ENCODE measurements at regions of chrX and their contacts with region 1.

Region 1: GRCh38 chrX:10722851-10723250 is 102.5 kb upstream of the MID1 start:
- DNase-seq: peak; percentile 54
- H3K4me3 Mint-ChIP-seq: no peak overlapping the region
- H3K27ac Mint-ChIP-seq: no peak overlapping the region
- H3K4me1 Mint-ChIP-seq: no peaks in the 10 kb centered on the region
- H3K27me3 Mint-ChIP-seq: no peaks in the 10 kb centered on the region

Region 2: DNA sequence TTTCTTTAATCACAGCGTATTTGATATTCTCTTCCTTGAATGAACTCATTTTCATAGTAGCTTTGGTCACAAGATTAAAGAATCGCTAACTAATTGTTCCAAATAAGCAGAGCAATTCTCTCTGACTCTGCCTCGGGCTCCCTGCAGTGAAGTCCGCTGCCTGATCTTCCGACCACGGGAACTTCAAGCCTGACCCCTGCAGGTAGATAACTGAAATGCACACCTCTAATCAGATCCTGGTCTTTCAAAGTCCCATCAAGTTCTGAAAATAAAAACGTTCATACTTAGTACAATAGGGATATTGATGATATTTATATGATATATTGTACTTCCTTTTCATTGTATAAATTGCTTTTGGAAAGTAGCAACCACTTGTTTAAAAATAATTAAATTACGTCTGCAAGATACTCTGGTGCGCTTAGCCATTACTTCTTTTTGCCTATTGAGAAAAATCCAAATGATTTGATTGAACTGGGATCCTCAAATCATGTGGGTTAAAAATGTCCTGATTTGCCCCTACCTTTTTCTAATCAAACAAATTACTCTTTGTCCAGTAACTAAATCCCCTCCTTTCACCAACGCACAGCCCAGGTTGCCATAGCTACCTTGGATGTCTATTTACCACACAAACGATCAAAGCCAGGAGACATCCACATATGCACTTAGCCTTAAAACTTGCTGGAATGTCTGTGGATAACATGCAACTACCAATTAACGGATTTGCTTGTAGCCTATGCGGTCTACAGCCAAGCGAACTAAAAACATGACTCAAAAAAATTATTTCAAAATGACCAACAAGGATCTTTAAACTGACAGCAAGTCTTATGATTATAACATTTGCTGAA is 106.7 kb before region 1 on chrX:
- CTCF ChIA-PET with region 1: no interaction called
- intact Hi-C with region 1: loop called (anchors 5 kb)
- DNase-seq: peak; percentile 13
- H3K4me3 Mint-ChIP-seq: no peak overlapping the region
- H3K27ac Mint-ChIP-seq: no peak overlapping the region
- H3K4me1 Mint-ChIP-seq: peaks cover 6% of the 10 kb centered on the region
- H3K27me3 Mint-ChIP-seq: peaks cover 27% of the 10 kb centered on the region

Region 3: GRCh38 chrX:11137543-11138139 is 414.8 kb after region 1 on chrX:
- CTCF ChIA-PET with region 1: no interaction called
- intact Hi-C with region 1: loop called (anchors 2 kb)
- DNase-seq: no peak
- H3K4me3 Mint-ChIP-seq: no peak overlapping the region
- H3K27ac Mint-ChIP-seq: no peak overlapping the region
- H3K4me1 Mint-ChIP-seq: peaks cover 2% of the 10 kb centered on the region
- H3K27me3 Mint-ChIP-seq: peaks cover 5% of the 10 kb centered on the region

Measured in activated naive CD4-positive, alpha-beta T cell treated with anti-CD3 and anti-CD28 coated beads for 36 hours (primary cell).